Endothelial cell of umbilical vein (primary cell): ENCODE measurements at regions of chr17 and their contacts with region 1.

Region 1: GRCh38 chr17:36948717-36949460 is at the start of gene AATF:
- DNase-seq: peak; percentile 97
- H3K4me3 ChIP-seq: peak within 1 kb of the TSS; percentile 43 to 83 (median 69)
- H3K27ac ChIP-seq: peak within 1 kb of the TSS; percentile 27
- H3K4me1 ChIP-seq: peaks cover 14% of the 10 kb centered on the region
- H3K27me3 ChIP-seq: peaks cover 36 to 44% of the 10 kb centered on the region in 2 experiments
- CTCF ChIP-seq: no peak
- POLR2A ChIP-seq: peak; percentile 56
- total RNA-seq, gene AATF: 44.8 and 47.2 TPM in 2 replicates

Region 2: DNA sequence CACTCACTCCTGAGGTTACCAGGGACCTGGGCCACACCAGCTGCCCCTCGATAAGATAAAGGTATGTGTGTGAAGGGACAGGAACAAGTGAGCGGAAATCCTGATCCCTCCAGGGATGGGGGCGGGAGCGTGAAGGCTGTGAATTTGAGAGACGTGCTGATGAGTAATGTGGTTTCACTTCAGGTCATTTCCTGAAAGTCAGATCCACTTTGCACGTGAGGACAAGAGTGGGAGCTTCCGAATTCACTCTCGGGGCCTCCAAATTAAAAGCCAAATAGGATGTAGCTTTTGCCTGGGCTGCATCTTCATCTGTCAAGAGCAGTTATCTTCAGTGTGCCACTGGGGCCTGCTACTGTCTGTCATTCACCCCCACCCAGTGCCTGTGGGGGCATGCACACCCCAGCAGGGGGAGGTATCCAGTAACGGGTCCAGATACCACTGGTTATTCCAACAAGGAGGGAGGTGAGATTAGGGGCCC is 99.0 kb before region 1 on chr17:
- CTCF ChIA-PET with region 1: no interaction called
- POLR2A ChIA-PET with region 1: no interaction called
- dilution Hi-C with region 1: no loop called
- intact Hi-C with region 1: loop called (anchors 2 kb)
- DNase-seq: peak; percentile 59
- H3K4me3 ChIP-seq: no peak overlapping the region
- H3K27ac ChIP-seq: peak overlapping the region; percentile 97
- H3K4me1 ChIP-seq: peaks cover 46% of the 10 kb centered on the region
- H3K27me3 ChIP-seq: no peaks in the 10 kb centered on the region
- CTCF ChIP-seq: peak in 1 of 2 donors; percentile 33
- POLR2A ChIP-seq: no peak